ENCODE measurements at regions of chr6 and their contacts with region 1.

Region 1: DNA sequence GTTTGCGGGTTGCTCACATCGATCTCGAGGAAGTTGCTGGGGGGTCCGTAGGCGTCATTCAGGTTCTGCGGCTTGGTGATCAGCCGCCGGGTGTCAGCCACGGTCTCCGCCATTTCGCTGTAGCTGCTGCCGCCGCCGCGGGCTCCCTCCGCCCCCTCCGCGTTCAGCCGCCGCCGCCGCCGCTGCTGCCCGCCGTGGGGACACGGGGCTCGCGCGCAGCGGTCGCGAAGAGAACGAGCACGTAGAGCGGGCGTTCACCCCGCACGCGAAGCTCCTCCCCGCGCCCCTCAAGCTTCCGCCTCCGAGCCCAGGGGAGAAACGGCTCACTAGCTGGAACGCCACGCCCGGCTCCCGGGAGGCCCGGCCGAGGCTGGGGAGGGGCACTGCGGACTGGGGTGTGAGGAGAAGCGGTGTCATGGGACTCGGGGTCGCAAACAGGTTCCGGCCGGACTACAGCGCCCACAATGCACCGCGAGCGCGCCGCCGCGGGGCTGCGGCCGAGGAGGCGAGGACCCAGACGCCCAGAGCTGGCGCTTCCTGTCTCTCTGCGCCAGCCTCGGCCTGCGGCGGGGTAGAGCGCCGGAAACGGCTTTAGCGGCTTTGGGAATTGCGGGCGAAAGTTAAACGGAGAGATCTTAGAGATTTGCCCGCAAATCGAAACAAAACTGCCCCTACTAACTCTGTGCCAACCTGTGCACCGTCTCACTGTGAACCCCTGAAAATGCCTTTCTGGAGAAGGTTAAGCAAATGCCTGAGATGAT is at the start of gene SNX3:
- DNase-seq: peak; percentile 88
- H3K4me3 Mint-ChIP-seq: peak within 1 kb of the TSS; percentile 90
- H3K27ac Mint-ChIP-seq: peak within 1 kb of the TSS; percentile 93
- H3K4me1 Mint-ChIP-seq: peaks cover 12% of the 10 kb centered on the region
- H3K27me3 Mint-ChIP-seq: peaks cover 6% of the 10 kb centered on the region
- total RNA-seq, gene SNX3: 68.5 and 72.5 TPM in 2 replicates

Region 2: GRCh38 chr6:107459283-107460082 is 801.5 kb before region 1 on chr6 and contains the start of gene PDSS2:
- intact Hi-C with region 1: loop called (anchors 10 kb)
- DNase-seq: peak; percentile 95
- H3K4me3 Mint-ChIP-seq: peak within 1 kb of the TSS; percentile 93
- H3K27ac Mint-ChIP-seq: peak within 1 kb of the TSS; percentile 91
- H3K4me1 Mint-ChIP-seq: peaks cover 16% of the 10 kb centered on the region
- H3K27me3 Mint-ChIP-seq: no peaks in the 10 kb centered on the region
- total RNA-seq, gene PDSS2: 11.8 and 14.5 TPM in 2 replicates

Region 3: DNA sequence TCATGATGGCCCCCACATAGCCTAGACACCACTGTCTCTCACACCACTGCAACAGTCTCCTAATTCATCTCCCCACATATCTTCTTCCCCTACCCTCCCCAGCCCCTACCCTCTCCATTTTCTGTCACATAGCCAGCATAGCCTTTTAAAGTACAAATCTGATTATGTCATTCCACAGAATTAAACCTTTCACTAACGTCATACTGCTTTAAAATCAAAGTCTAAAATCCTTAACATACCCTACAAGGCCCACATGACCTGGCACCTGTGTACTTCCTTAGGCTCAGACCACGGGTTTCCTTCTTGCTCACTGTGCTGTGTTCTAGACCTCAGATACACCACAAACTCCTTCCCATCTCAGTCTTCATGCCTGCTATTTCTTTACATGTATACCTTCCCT is 192.4 kb before region 1 on chr6:
- intact Hi-C with region 1: no loop called
- DNase-seq: peak; percentile 14
- H3K4me3 Mint-ChIP-seq: no peak overlapping the region
- H3K27ac Mint-ChIP-seq: no peak overlapping the region
- H3K4me1 Mint-ChIP-seq: peaks cover 7% of the 10 kb centered on the region
- H3K27me3 Mint-ChIP-seq: peaks cover 2% of the 10 kb centered on the region

Region 4: GRCh38 chr6:108294727-108295625 is 34.0 kb after region 1 on chr6 and contains the start of gene AFG1L:
- intact Hi-C with region 1: loop called (anchors 1 kb)
- DNase-seq: peak; percentile 82
- H3K4me3 Mint-ChIP-seq: peak within 1 kb of the TSS; percentile 100
- H3K27ac Mint-ChIP-seq: peak within 1 kb of the TSS; percentile 100
- H3K4me1 Mint-ChIP-seq: peaks cover 26% of the 10 kb centered on the region
- H3K27me3 Mint-ChIP-seq: peaks cover 2% of the 10 kb centered on the region
- total RNA-seq, gene AFG1L: 4.3 and 6.0 TPM in 2 replicates

Region 5: DNA sequence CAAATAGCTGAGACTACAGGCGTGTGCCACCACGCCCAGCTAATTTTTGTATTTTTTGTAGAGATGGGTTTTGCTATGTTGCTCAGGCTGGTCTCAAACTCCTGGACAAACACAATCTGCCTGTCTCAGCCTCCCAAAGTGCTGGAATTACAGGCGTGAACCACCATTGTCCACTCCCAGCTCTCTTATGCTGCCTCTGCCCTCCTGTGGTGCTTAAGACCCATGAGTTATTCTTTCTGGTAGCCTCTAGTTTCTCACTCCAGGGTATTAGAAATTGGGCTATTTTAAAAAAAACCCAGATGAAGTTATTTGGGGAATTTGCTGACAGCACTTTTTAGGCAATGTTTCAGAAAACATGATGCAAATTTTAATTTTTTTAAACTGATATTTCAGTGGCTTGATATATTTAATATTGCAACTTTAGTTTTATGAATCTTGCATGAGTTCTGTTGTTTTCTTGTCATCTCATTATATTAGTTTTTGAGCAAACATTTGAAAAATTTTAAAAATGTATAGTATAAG is 185.7 kb after region 1 on chr6:
- intact Hi-C with region 1: loop called (anchors 1 kb)
- DNase-seq: no peak
- H3K4me3 Mint-ChIP-seq: no peak overlapping the region
- H3K27ac Mint-ChIP-seq: no peak overlapping the region
- H3K4me1 Mint-ChIP-seq: peaks cover 10% of the 10 kb centered on the region
- H3K27me3 Mint-ChIP-seq: peaks cover 38% of the 10 kb centered on the region

Region 6: GRCh38 chr6:108558372-108559096 is 297.5 kb after region 1 on chr6:
- intact Hi-C with region 1: loop called (anchors 1 kb)
- DNase-seq: peak; percentile 95
- H3K4me3 Mint-ChIP-seq: peak overlapping the region; percentile 88
- H3K27ac Mint-ChIP-seq: peak overlapping the region; percentile 91
- H3K4me1 Mint-ChIP-seq: peaks cover 32% of the 10 kb centered on the region
- H3K27me3 Mint-ChIP-seq: peaks cover 47% of the 10 kb centered on the region

Region 7: GRCh38 chr6:108764580-108764950 is 503.6 kb after region 1 on chr6:
- intact Hi-C with region 1: no loop called
- DNase-seq: no peak
- H3K4me3 Mint-ChIP-seq: no peak overlapping the region
- H3K27ac Mint-ChIP-seq: no peak overlapping the region
- H3K4me1 Mint-ChIP-seq: peaks cover 10% of the 10 kb centered on the region
- H3K27me3 Mint-ChIP-seq: peaks cover 16% of the 10 kb centered on the region

Region 8: GRCh38 chr6:108883172-108883571 is 622.2 kb after region 1 on chr6:
- intact Hi-C with region 1: loop called (anchors 5 kb)
- DNase-seq: no peak
- H3K4me3 Mint-ChIP-seq: peak overlapping the region; percentile 56
- H3K27ac Mint-ChIP-seq: peak overlapping the region; percentile 93
- H3K4me1 Mint-ChIP-seq: peaks cover 58% of the 10 kb centered on the region
- H3K27me3 Mint-ChIP-seq: peaks cover 28% of the 10 kb centered on the region

Region 9: GRCh38 chr6:109472132-109472995 is 1211.4 kb after region 1 on chr6:
- intact Hi-C with region 1: no loop called
- DNase-seq: no peak
- H3K4me3 Mint-ChIP-seq: peak overlapping the region; percentile 9
- H3K27ac Mint-ChIP-seq: peak overlapping the region; percentile 34
- H3K4me1 Mint-ChIP-seq: peaks cover 80% of the 10 kb centered on the region
- H3K27me3 Mint-ChIP-seq: no peaks in the 10 kb centered on the region

Measured in activated T-helper 1 cell treated with anti-CD3 and anti-CD28 coated beads, Interleukin-12 subunit alpha, Interleukin-12 subunit beta, Interleukin-2, Interleukin-4 antibody, amounts not matched to agents 30 ng/mL and 10 ng/mL and 1 ng/mL, durations not matched to agents 14 hours and 24 hours and 36 hours (primary cell).